ENCODE measurements at regions of chr20 and their contacts with region 1.

Region 1: GRCh38 chr20:25418776-25419175 is 11.3 kb downstream of the GINS1 start:
- DNase-seq: no peak
- H3K4me3 Mint-ChIP-seq: no peak overlapping the region
- H3K27ac Mint-ChIP-seq: no peak overlapping the region
- H3K4me1 Mint-ChIP-seq: no peaks in the 10 kb centered on the region
- H3K27me3 Mint-ChIP-seq: no peaks in the 10 kb centered on the region
- CTCF ChIP-seq: no peak

Region 2: DNA sequence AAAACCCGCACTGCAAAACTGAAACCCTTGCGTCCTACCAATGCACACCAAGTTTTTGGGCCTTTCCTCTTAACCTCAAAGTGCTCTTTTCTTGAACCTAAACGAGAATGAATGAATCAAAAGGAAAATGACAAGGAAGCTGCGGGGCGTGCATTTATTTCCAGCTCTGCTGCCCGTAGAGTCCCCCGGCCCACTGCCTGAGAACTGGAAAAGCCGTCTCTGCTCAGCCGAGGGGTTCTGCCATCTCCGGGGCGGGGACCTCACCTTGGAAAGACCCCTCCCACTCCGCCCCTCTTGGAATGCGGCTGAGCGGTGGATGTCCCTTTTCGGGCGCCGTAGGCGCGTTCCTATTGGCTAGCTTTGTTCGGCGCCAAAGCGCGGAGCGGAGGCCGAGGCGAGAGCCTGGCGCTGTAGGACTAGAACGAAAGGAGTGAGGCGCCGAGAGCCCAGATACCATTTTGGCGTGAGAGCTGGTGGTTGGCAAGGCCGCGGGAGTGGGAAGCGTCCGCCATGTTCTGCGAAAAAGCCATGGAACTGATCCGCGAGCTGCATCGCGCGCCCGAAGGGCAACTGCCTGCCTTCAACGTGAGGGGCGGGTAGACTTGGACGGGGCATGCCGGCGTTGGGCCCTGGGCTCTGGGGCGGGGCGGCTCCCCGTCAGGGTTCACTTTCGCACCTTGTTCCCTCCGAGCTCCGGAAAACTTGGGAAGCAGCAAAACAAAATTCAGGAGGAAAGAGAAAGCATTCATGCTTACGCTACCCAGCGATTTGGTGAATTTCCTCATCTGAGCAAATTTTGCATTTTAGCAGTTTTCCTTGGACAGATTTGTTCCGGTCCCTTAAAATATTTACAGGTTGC is 11.2 kb before region 1 on chr20 and contains the start of gene GINS1:
- CTCF ChIA-PET with region 1: interaction called, 3 read pairs
- POLR2A ChIA-PET with region 1: interaction called, 16 read pairs
- intact Hi-C with region 1: no loop called
- DNase-seq: peak; percentile 90
- H3K4me3 Mint-ChIP-seq: peak within 1 kb of the TSS; percentile 92
- H3K27ac Mint-ChIP-seq: peak within 1 kb of the TSS; percentile 69
- H3K4me1 Mint-ChIP-seq: peaks cover 15% of the 10 kb centered on the region
- H3K27me3 Mint-ChIP-seq: no peaks in the 10 kb centered on the region
- CTCF ChIP-seq: no peak
- total RNA-seq, gene GINS1: 5.2 and 6.0 TPM in 2 replicates

Measured in MCF 10A (cell line).